Transverse colon (tissue), 4 donors: ENCODE measurements at regions of chr2 and their contacts with region 1.

Region 1: DNA sequence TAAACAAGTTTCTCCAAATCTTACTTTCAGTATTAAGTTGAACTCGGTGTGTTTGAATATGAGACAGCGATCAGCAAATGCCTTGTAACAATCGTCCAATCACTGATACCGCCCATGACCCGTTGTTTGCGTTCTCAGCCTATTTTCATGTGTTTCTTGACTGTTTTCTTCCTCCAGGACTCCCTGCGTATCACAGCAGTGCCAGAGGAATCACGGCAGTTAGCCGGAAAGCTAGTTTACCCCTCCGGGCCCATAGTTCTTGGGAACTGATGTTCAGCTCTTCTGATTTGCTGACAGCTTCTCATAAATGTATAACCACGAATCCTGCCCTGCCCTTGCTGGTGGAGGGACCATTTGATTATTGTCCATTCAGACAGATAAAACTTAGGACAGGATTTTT is 42.2 kb upstream of the TPO start:
- DNase-seq: no peak
- H3K4me3 ChIP-seq: no peak overlapping the region
- H3K27ac ChIP-seq: no peak overlapping the region
- H3K4me1 ChIP-seq: no peaks in the 10 kb centered on the region
- H3K27me3 ChIP-seq: no peaks in the 10 kb centered on the region
- CTCF ChIP-seq: no peak
- EP300 ChIP-seq: no peak
- POLR2A ChIP-seq: no peak

Region 2: DNA sequence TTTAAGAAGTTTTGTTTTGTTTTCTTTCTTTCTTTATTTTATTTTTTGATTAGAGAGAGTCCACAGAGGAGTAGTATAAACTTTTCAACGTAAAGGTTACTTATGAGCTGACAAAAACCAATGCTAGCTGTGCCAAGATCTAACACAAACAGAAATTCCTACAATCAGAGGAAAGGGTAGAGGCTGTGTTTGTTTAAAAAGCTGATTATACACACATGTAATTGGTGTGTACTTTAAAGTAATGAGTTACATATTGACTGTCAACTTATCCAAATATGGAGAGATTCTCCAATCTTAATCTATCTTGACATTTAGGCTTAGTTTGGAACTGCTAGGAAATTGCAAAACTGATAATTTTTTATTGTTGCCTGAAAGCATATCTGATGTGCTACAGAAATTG is 1261.1 kb before region 1 on chr2:
- in situ Hi-C with region 1: no loop called
- intact Hi-C with region 1: loop called (anchors 5 kb)
- DNase-seq: no peak
- H3K4me3 ChIP-seq: no peak overlapping the region
- H3K27ac ChIP-seq: no peak overlapping the region
- H3K4me1 ChIP-seq: peaks cover 0 to 10% (median 2%) of the 10 kb centered on the region in 4 donors
- H3K27me3 ChIP-seq: no peaks in the 10 kb centered on the region
- CTCF ChIP-seq: no peak
- EP300 ChIP-seq: no peak
- POLR2A ChIP-seq: no peak

Region 3: DNA sequence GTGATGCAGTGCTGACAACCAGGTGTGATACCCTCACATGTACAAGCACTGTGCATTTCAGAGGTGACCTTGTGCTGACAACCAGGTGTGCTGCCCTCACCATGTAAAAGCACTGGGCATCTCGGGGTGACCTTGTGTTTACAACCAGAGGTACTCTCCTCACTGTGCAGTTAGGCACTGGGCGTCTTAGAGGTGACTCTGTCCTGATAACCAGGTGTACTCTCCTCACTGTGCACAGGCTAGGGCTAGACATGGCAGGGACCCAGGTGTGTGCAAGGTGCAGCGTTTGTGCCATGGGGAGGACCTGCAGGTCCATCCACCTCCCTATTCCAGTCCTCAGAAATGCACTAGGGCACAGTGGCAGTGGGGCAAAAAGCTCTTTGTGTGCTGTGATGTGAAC is 1074.7 kb before region 1 on chr2:
- in situ Hi-C with region 1: no loop called
- intact Hi-C with region 1: no loop called
- DNase-seq: no peak
- H3K4me3 ChIP-seq: no peak overlapping the region
- H3K27ac ChIP-seq: no peak overlapping the region
- H3K4me1 ChIP-seq: no peaks in the 10 kb centered on the region
- H3K27me3 ChIP-seq: peaks cover 23% of the 10 kb centered on the region
- CTCF ChIP-seq: no peak
- EP300 ChIP-seq: no peak
- POLR2A ChIP-seq: no peak

Region 4: DNA sequence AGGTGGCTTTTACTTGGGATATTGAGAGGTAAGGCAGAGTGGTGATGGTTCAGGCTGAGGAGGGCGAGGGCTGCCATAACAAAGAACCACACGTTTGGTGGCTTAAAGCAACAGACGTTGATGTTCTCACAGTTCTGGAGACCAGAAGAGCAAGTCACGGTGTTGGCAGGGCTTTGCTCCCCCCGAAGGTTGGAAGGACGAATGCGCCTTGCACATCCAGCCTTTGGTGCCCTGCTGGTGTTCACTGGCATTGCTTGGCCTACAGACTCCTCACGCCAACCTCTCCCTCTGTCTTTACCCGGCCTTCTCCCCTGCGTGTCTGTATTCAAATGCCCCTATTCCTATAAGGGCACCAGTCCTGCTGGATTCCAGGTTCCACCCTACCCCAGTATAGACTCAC is 167.6 kb after region 1 on chr2:
- in situ Hi-C with region 1: no loop called
- intact Hi-C with region 1: no loop called
- DNase-seq: no peak
- H3K4me3 ChIP-seq: no peak overlapping the region
- H3K27ac ChIP-seq: no peak overlapping the region
- H3K4me1 ChIP-seq: no peaks in the 10 kb centered on the region
- H3K27me3 ChIP-seq: no peaks in the 10 kb centered on the region
- CTCF ChIP-seq: peak in 3 of 5 experiments; percentile 8 to 16 (median 11)
- EP300 ChIP-seq: no peak
- POLR2A ChIP-seq: no peak